ENCODE measurements at regions of chr3 and their contacts with region 1.

Region 1: GRCh38 chr3:197674741-197675562 is 61.8 kb downstream of the RUBCN start:
- DNase-seq: no peak
- H3K4me3 ChIP-seq: no peak overlapping the region
- CTCF ChIP-seq: no peak

Region 2: GRCh38 chr3:197238842-197239241 is 436.1 kb before region 1 on chr3:
- in situ Hi-C with region 1: no loop called
- DNase-seq: no peak
- H3K4me3 ChIP-seq: no peak overlapping the region
- CTCF ChIP-seq: no peak

Region 3: GRCh38 chr3:197599089-197599765 is 75.7 kb before region 1 on chr3:
- in situ Hi-C with region 1: loop called (anchors 10 kb)
- DNase-seq: peak; percentile 57
- H3K4me3 ChIP-seq: peak overlapping the region; percentile 25
- CTCF ChIP-seq: peak; percentile 80

Measured in astrocyte of the cerebellum (primary cell).